ENCODE measurements at regions of chr1 and their contacts with region 1.

Region 1: GRCh38 chr1:207205614-207206061 is 101.6 kb downstream of the C4BPA start:
- DNase-seq: peak; percentile 80
- H3K4me3 ChIP-seq: peak overlapping the region in 1 of 3 experiments; percentile 40
- H3K27ac ChIP-seq: peak overlapping the region; percentile 77
- H3K4me1 ChIP-seq: peaks cover 16% of the 10 kb centered on the region
- H3K27me3 ChIP-seq: no peaks in the 10 kb centered on the region
- CTCF ChIP-seq: no peak
- POLR2A ChIP-seq: no peak

Region 2: DNA sequence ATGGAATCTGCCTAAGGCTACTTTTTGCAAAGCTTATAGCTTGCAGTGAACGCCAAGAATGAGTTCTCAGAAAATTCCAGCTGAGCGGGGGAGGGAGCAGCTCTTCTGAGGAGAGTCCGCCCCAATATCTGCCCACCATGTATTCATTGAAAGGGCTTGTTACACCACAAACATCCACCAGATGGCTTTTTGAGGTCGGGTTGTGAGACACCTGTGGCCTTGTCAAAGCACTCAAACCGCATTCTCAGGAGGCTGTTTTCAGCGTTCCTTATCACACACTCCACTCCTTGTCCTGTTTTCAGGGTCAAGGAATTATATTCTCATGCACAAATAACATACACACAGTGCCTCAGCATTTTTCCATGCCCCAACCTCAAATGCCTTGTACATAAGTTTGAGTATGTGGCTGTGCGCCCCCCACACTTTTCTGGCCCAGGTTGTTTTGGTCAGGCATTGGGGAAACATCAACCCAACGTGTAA is 120.9 kb before region 1 on chr1:
- CTCF ChIA-PET with region 1: interaction called, 4 read pairs
- POLR2A ChIA-PET with region 1: no interaction called
- dilution Hi-C with region 1: no loop called
- intact Hi-C with region 1: loop called (anchors 1 kb)
- DNase-seq: peak; percentile 75
- H3K4me3 ChIP-seq: no peak overlapping the region
- H3K27ac ChIP-seq: no peak overlapping the region
- H3K4me1 ChIP-seq: no peaks in the 10 kb centered on the region
- H3K27me3 ChIP-seq: peaks cover 2 to 3% of the 10 kb centered on the region in 2 experiments
- CTCF ChIP-seq: peak; percentile 39 to 63
- POLR2A ChIP-seq: no peak

Region 3: DNA sequence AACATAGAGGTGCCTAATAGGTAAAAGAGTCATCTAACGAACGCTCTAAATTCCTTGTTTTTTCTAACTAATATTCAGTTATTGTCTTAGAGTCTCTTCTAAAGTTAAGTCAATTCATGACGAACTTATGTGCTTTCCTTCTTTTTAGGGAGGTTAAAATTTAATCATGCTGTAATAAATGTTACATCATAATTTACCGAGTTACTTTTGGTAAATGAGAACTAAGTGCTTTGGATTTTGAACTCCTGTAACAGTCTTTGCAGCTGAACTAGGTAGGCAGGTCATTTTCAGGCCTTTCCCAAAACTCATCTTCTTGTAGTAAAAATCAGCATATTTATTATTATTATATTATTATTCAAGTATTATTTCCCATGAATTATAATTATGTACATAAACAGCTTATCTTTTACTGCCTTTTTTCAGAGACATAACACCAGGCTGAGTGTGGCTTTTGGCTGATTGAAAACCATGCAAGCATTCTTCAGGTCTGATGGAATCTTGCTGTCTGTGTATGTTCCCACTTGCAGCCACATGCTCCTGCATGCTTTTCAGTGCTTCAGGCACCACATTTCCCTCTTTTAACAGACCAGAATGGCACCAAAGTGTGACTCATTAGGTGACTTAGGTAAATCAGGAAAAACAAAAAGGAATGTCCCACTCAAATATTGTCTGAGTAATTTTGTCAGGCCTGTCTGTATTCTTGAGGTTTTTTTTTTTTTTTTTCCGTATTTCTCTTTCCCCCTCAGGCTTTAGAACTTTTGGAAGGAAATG is 34.9 kb after region 1 on chr1:
- CTCF ChIA-PET with region 1: no interaction called
- POLR2A ChIA-PET with region 1: no interaction called
- dilution Hi-C with region 1: no loop called
- intact Hi-C with region 1: loop called (anchors 1 kb)
- DNase-seq: peak; percentile 59
- H3K4me3 ChIP-seq: no peak overlapping the region
- H3K27ac ChIP-seq: no peak overlapping the region
- H3K4me1 ChIP-seq: peaks cover 18% of the 10 kb centered on the region
- H3K27me3 ChIP-seq: no peaks in the 10 kb centered on the region
- CTCF ChIP-seq: no peak
- POLR2A ChIP-seq: no peak

Region 4: GRCh38 chr1:207282058-207282457 is 76.4 kb after region 1 on chr1:
- CTCF ChIA-PET with region 1: interaction called, 4 read pairs
- POLR2A ChIA-PET with region 1: no interaction called
- dilution Hi-C with region 1: no loop called
- intact Hi-C with region 1: loop called (anchors 1 kb)
- DNase-seq: peak; percentile 96
- H3K4me3 ChIP-seq: peak overlapping the region in 1 of 3 experiments; percentile 36
- H3K27ac ChIP-seq: peak overlapping the region; percentile 97
- H3K4me1 ChIP-seq: peaks cover 44% of the 10 kb centered on the region
- H3K27me3 ChIP-seq: no peaks in the 10 kb centered on the region
- CTCF ChIP-seq: no peak
- POLR2A ChIP-seq: no peak

Region 5: GRCh38 chr1:207309775-207310273 is 104.2 kb after region 1 on chr1:
- CTCF ChIA-PET with region 1: no interaction called
- POLR2A ChIA-PET with region 1: no interaction called
- dilution Hi-C with region 1: no loop called
- intact Hi-C with region 1: loop called (anchors 1 kb)
- DNase-seq: peak; percentile 89
- H3K4me3 ChIP-seq: peak overlapping the region in 1 of 3 experiments; percentile 23
- H3K27ac ChIP-seq: peak overlapping the region; percentile 69
- H3K4me1 ChIP-seq: peaks cover 37% of the 10 kb centered on the region
- H3K27me3 ChIP-seq: no peaks in the 10 kb centered on the region
- CTCF ChIP-seq: no peak
- POLR2A ChIP-seq: no peak

Region 6: DNA sequence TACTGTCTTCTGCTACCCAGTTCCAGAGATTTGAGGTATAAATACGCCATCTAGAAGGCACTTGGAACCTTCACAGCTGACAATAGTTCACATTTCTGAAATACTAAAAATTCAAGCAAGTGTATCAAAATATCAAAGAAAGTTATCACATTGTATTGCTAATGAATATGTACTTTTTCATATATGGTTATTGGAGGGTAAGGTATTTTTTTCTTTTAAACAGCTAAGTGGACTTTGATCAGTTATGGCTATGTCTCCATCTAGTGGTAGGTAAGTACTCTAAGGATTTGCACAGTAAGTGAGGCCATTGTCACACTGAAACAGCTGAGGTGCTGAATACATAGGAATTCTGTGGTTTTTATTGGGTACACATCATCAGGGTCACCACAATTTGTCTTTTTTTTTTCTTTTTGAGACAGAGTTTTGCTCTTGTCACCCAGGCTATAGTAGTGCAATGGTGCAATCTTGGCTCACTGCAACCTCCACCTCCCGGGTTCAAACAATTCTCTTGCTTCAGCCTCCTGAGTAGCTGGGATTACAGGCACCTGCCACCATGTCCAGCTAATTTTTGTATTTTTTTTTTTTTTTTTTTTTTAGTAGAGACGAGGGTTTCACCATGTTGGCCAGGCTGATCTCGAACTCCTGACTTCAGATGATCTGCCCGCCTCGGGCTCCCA is 199.3 kb after region 1 on chr1:
- CTCF ChIA-PET with region 1: interaction called, 5 read pairs
- POLR2A ChIA-PET with region 1: no interaction called
- dilution Hi-C with region 1: no loop called
- intact Hi-C with region 1: loop called (anchors 2 kb)
- DNase-seq: peak; percentile 70
- H3K4me3 ChIP-seq: no peak overlapping the region
- H3K27ac ChIP-seq: no peak overlapping the region
- H3K4me1 ChIP-seq: peaks cover 5% of the 10 kb centered on the region
- H3K27me3 ChIP-seq: peaks cover 6 to 9% of the 10 kb centered on the region in 2 experiments
- CTCF ChIP-seq: peak; percentile 49 to 55
- POLR2A ChIP-seq: no peak

Measured in endothelial cell of umbilical vein (primary cell).